ENCODE measurements at regions of chr10 and their contacts with region 1.

Region 1: GRCh38 chr10:34637418-34637911 is 177.6 kb downstream of the PARD3 start:
- DNase-seq: peak; percentile 75
- CTCF ChIP-seq: peak; percentile 95

Region 2: GRCh38 chr10:33193057-33193700 is 1444.3 kb before region 1 on chr10:
- CTCF ChIA-PET with region 1: interaction called, 14 read pairs
- POLR2A ChIA-PET with region 1: no interaction called
- DNase-seq: peak; percentile 55
- CTCF ChIP-seq: peak; percentile 62

Region 3: DNA sequence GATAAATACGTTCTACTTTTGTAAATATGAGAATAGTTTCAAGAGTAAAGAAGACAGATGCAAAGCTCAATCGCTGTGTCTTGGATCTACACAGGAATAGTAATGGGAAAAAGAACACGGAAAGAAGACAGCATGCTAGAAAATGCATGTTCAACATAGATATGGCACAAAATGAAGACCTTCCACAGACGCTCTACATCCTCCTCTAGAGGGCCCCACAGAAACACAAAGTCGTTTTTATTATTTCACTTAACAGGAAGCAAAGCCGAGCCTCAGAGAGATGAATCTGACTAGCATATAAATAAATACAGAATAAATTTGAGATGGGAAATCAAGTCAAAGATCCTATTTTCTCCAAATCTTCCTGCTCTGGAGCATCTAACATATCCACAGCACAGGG is 114.9 kb before region 1 on chr10:
- CTCF ChIA-PET with region 1: interaction called, 30 read pairs
- POLR2A ChIA-PET with region 1: no interaction called
- DNase-seq: peak; percentile 29
- CTCF ChIP-seq: peak; percentile 56

Region 4: DNA sequence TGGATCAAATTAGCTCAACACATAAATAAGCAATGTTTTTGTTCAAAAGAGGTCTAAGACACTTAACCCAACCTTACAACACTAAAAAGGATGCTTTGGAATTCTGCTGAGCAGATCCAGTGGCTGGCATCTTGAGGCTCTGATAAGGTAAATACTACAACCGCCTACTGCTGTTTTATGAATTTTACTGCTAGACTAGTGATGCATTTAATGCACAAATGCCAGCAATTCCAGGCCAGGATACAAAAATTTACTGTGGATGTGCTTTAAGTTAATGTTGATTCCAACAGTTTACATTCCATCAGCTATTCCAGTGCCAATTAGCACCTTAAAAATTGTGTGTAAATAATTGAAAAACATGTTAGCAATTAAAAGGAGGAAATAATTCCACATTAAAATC is 83.7 kb before region 1 on chr10:
- CTCF ChIA-PET with region 1: no interaction called
- POLR2A ChIA-PET with region 1: no interaction called
- DNase-seq: no peak
- CTCF ChIP-seq: no peak

Region 5: DNA sequence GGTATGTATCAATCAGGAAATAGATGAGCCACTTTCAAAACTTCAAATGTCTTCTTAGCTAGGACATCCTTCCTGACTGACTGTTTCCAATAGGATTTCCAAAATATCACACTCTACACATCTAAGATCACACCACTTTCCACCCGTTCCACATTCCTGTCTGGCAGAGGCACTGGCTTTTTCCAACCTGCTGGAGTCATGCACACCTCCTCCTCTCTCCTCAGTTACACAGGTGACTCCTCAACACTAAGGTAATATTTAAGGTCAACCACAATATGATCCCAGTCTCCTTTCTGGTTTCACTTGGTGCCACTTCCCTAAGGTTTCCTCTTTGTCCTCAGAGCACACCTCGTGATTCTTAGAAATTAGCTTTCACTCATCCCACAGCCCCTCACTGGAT is 18.9 kb before region 1 on chr10:
- CTCF ChIA-PET with region 1: interaction called, 17 read pairs
- POLR2A ChIA-PET with region 1: no interaction called
- DNase-seq: no peak
- CTCF ChIP-seq: no peak

Region 6: GRCh38 chr10:34650156-34650555 is 12.7 kb after region 1 on chr10:
- CTCF ChIA-PET with region 1: interaction called, 55 read pairs
- POLR2A ChIA-PET with region 1: no interaction called
- DNase-seq: no peak
- CTCF ChIP-seq: no peak

Region 7: GRCh38 chr10:35005868-35006267 is 368.4 kb after region 1 on chr10:
- CTCF ChIA-PET with region 1: no interaction called
- POLR2A ChIA-PET with region 1: no interaction called
- DNase-seq: no peak
- CTCF ChIP-seq: no peak

Measured in GM10248 (cell line).